ENCODE measurements at regions of chr18 and their contacts with region 1.

Region 1: DNA sequence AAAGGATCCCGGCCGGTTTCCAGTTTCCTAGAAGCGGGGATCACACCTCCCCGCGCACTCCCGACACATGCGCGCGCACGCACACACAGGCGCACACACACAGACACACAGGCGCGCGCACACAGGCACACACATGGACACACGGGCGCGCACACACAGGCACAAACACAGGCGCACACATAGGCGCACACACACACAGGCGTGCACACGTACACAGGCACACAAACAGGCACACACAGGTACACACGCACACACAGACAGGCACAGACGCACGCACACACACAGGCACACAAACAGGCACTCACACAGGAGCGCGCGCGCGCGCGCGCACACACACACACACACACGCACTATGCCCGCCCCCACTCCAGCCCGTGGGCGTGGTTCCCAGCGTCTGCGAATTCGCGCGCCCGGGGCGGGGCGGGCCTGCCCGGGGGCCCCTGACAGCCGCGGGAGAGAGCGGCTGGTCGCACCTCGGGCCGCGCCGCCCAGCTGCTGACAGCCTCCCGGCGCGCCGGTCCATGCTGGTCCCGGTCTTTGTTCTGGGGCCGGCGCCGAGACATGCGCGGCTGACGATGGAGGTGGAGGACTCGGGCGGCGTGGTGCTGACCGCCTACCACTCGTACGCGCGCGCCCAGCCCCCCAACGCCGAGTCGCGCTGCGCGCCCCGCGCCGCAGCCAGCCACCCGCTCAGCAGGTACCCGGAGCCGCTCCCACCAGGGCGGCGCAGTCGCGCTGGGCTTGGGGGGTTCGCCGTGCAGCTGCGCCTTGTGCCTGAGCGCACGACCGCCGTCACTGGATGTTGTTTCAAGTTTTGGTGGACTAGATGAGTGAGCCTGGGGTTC is at the start of gene ARHGAP28:
- DNase-seq: peak; percentile 79 to 83
- ATAC-seq: peak; percentile 93 to 98 (median 96)
- H3K4me3 ChIP-seq: peak within 1 kb of the TSS; percentile 40 to 78 (median 68)
- H3K27ac ChIP-seq: peak within 1 kb of the TSS; percentile 63 to 91 (median 82)
- H3K4me1 ChIP-seq: peaks cover 0 to 26% (median 8%) of the 10 kb centered on the region in 9 donors
- H3K27me3 ChIP-seq: peaks cover 0 to 7% (median 0%) of the 10 kb centered on the region in 7 donors
- CTCF ChIP-seq: peak in 8 of 9 donors; percentile 17 to 64 (median 36)
- total RNA-seq, gene ARHGAP28: 0.82 to 5.3 (median 2.6) TPM

Region 2: DNA sequence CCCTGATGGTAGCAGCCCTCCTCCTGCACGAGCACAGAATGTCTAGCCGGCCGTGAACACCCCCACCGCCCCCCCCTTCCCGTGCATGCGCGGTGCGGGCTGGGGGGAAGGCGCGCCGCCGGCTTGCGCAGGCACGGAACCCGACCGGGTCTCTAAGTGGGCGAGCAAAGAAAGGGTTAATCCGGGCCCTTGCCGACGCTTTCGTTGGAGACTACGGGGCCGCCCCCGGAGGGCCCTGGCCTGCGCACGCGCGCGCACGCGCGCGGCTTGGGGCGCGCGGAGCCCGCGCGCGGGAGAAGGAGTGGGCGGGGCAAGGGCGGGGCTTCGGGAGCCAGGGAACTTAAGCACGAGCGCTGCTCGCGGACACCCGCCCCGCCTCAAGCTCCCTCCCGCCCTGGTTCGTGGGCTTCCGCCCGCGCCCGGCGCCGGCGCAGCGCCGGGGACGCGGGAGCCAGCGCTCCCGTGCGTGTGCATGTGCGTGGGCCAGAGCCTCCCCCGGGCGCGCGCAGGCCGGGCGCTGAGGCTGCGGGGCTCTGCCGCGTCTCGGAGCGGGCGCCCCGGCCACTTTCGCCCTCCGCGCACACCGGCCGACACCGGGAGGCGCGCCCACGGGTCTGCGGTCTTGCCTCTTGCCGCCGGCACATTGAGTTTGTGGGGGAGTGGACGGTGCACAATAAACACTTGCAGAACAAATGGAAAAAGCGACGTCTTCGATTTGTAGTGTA is 1433.3 kb before region 1 on chr18:
- intact Hi-C with region 1: loop called in 1 of 10 experiments (anchors 5 kb)
- DNase-seq: peak; percentile 95 to 98
- ATAC-seq: peak; percentile 89 to 98 (median 92)
- H3K4me3 ChIP-seq: peak overlapping the region; percentile 52 to 99 (median 78)
- H3K27ac ChIP-seq: peak overlapping the region; percentile 92 to 100 (median 97)
- H3K4me1 ChIP-seq: peaks cover 0 to 21% (median 13%) of the 10 kb centered on the region in 9 donors
- H3K27me3 ChIP-seq: peaks cover 0 to 4% (median 0%) of the 10 kb centered on the region in 7 donors
- CTCF ChIP-seq: no peak

Region 3: DNA sequence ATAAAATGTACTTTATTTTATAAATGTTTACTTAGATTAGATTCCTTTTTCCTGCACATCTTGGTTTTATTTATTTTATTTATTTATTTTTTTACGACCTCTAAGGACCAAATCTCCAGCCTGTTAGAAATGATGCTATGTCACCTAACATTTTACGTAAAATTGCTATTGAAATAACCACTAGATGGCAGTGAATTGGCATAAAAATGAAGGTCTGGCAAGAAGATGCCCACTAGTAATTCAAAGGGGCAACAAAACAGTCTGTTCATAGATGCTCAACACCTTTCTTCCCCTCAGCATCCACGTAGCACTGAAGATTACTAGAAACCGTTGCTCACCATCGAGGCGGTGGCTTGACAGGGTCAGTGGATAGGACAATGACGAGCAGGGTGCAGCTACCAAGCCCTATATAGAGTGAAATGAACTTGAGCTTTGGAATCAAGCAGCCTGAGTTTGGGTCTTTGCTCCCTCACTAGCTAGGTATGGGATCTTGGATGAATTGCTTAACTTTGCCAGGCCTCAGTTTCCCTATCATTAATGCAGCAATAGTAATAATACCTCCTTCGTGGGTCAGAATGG is 186.1 kb before region 1 on chr18:
- intact Hi-C with region 1: loop called in 1 of 10 experiments (anchors 10 kb)
- DNase-seq: no peak
- ATAC-seq: peak in 1 of 8 donors; percentile 14
- H3K4me3 ChIP-seq: no peak overlapping the region
- H3K27ac ChIP-seq: no peak overlapping the region
- H3K4me1 ChIP-seq: peaks cover 0 to 10% (median 0%) of the 10 kb centered on the region in 9 donors
- H3K27me3 ChIP-seq: no peaks in the 10 kb centered on the region
- CTCF ChIP-seq: peak; percentile 52 to 77 (median 64)

Region 4: DNA sequence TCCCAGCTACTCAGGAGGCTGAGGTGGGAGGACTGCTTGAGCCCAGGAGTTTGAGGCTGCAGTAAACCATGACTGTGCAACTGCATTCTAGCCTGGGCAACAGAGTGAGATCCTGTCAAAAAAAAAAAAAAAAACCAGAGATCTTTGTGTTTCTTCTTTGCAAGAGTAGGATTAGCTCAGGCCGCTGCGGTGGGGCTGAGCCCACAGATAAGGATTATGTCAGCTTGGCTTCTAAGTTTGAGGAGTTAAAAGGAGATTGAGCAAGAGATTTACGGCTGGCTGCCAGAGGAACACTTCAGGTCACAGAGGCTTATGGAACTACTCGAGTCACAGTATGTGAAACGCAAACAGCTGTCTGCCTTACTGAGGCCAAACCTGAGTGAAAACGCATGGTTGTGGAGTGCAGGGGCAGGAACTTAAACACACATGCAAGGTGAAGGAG is 168.0 kb before region 1 on chr18:
- intact Hi-C with region 1: loop called in 1 of 10 experiments (anchors 10 kb)
- DNase-seq: peak; percentile 10 to 37
- ATAC-seq: peak in 7 of 8 donors; percentile 42 to 88 (median 64)
- H3K4me3 ChIP-seq: no peak overlapping the region
- H3K27ac ChIP-seq: no peak overlapping the region
- H3K4me1 ChIP-seq: no peaks in the 10 kb centered on the region
- H3K27me3 ChIP-seq: peaks cover 0 to 3% (median 0%) of the 10 kb centered on the region in 7 donors
- CTCF ChIP-seq: no peak

Region 5: DNA sequence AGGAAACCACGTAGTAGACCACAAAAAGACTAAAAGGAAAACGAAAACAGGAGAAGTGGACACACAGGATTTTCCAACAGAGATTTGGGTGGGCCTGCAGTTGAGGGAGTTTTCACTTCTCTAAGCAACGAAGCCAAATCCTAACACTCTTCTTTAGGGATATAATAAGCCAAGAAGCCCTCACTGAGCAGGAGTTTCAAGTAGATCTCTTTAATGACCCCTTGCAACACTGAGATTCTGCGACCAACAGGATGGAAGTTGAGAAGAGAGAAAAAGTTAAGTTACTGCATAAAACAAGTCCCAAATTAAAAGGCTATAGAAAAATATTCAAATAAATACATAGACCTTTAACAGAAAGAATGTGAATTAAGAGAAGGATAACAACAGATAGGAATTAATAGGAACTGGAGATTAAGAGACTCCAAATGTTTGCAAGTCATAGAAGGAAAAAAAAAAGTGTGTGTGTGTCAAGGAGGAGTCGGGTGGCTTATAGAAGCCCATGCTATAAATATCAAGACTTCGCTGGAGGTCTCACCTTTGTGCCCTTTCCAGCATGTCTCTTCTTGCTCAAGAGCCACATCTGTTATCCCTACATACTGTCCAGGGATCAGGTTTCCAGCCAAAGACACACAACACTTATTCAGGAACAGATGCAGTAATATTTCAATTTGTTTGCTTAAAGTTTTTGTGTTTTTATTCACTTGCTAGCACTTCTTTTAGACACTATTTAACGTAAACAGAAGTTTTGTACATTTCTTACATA is 69.3 kb before region 1 on chr18:
- intact Hi-C with region 1: loop called in 1 of 10 experiments (anchors 10 kb)
- DNase-seq: no peak
- ATAC-seq: no peak
- H3K4me3 ChIP-seq: no peak overlapping the region
- H3K27ac ChIP-seq: no peak overlapping the region
- H3K4me1 ChIP-seq: peaks cover 0 to 11% (median 0%) of the 10 kb centered on the region in 9 donors
- H3K27me3 ChIP-seq: peaks cover 0 to 3% (median 0%) of the 10 kb centered on the region in 7 donors
- CTCF ChIP-seq: no peak

Region 6: GRCh38 chr18:6677086-6677485 is 52.4 kb before region 1 on chr18:
- intact Hi-C with region 1: no loop called
- DNase-seq: no peak
- ATAC-seq: no peak
- H3K4me3 ChIP-seq: no peak overlapping the region
- H3K27ac ChIP-seq: no peak overlapping the region
- H3K4me1 ChIP-seq: no peaks in the 10 kb centered on the region
- H3K27me3 ChIP-seq: no peaks in the 10 kb centered on the region
- CTCF ChIP-seq: no peak

Region 7: DNA sequence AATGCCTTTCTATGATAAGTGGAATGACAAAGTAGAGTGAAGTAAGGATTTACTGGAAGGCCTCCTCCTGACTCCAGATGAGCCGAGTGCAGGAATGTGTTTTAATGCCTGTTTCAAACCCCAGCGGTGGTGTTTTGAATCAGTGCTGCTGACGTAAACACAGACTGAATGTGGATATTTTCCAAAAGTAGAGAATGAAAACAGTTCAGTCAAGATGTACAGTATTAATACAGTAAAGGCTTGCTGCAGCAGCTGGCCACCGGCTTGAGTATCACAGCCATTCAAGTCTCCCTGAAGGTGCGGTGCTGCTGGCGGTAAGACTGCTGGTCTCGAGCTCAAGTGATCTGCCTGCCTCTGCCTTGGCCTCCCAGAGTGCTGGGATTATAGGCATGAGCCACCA is 46.7 kb after region 1 on chr18:
- intact Hi-C with region 1: loop called in 1 of 10 experiments (anchors 5 kb)
- DNase-seq: no peak
- ATAC-seq: peak in 4 of 8 donors; percentile 17 to 63 (median 34)
- H3K4me3 ChIP-seq: peak overlapping the region in 1 of 10 donors; percentile 25
- H3K27ac ChIP-seq: peak overlapping the region in 5 of 10 donors; percentile 17 to 57 (median 35)
- H3K4me1 ChIP-seq: peaks cover 3 to 10% (median 4%) of the 10 kb centered on the region in 9 donors
- H3K27me3 ChIP-seq: no peaks in the 10 kb centered on the region
- CTCF ChIP-seq: no peak

Region 8: GRCh38 chr18:7152440-7152839 is 423.0 kb after region 1 on chr18:
- intact Hi-C with region 1: no loop called
- DNase-seq: no peak
- ATAC-seq: no peak
- H3K4me3 ChIP-seq: no peak overlapping the region
- H3K27ac ChIP-seq: no peak overlapping the region
- H3K4me1 ChIP-seq: no peaks in the 10 kb centered on the region
- H3K27me3 ChIP-seq: no peaks in the 10 kb centered on the region
- CTCF ChIP-seq: no peak